Mucosa of descending colon (tissue), 3 donors: ENCODE measurements at regions of chr6 and their contacts with region 1.

Region 1: DNA sequence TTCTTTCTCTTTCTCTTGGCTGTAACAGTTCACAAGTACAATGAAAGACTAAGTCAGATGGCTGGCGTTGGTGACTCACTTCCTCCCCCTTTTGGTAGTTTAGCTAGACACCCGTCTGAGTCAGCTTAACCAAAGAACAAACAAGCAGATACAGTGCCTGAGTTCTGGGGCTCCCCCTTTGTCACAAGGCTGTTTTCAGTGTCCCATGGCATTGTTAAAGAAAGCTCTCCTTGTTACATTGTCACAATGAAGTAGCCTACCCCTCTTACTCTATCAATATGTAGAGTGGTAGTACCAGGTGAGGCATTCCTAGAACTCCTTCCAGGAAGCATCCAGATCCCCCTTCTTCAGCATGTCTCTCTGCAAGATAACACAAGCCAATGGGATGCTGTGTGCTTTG is 38.6 kb downstream of the KIAA0408 start:
- DNase-seq: peak in 1 of 3 donors; percentile 63
- ATAC-seq: peak; percentile 100
- H3K4me3 ChIP-seq: no peak overlapping the region
- H3K4me1 ChIP-seq: no peaks in the 10 kb centered on the region
- CTCF ChIP-seq: no peak

Region 2: GRCh38 chr6:127302728-127303660 is 117.6 kb before region 1 on chr6:
- intact Hi-C with region 1: loop called in 1 of 2 experiments (anchors 5 kb)
- DNase-seq: peak in 1 of 3 donors; percentile 83
- ATAC-seq: peak; percentile 84
- H3K4me3 ChIP-seq: no peak overlapping the region
- H3K4me1 ChIP-seq: no peaks in the 10 kb centered on the region
- CTCF ChIP-seq: peak; percentile 25